ENCODE measurements at regions of chr21 and their contacts with region 1.

Region 1: DNA sequence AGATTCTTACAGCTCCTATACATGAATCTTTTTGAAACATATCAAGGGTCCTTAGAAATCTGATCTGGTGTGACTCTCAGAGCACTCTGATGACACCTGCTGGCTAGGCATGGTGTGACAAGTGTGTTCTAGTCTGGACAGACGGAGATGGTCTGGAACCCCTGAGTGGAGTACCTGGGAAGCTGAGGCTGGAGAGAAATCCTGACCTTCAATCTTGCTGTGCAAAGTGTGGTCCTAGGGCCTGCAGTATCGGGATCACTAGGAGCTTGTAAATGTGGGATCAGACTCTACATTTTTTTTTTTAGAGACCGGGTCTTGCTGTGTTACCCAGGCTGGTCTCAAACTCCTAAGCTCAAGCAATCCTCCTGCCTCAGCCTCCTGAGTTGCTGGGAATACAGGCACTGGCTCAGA is 78.6 kb upstream of the SOD1 start:
- DNase-seq: peak; percentile 26
- ATAC-seq: peak; percentile 96
- H3K4me3 ChIP-seq: no peak overlapping the region
- H3K27ac ChIP-seq: no peak overlapping the region
- H3K4me1 ChIP-seq: no peaks in the 10 kb centered on the region
- H3K27me3 ChIP-seq: no peaks in the 10 kb centered on the region
- CTCF ChIP-seq: peak; percentile 79 to 87 (median 86)
- EP300 ChIP-seq: no peak
- POLR2A ChIP-seq: no peak
- RAD21 ChIP-seq: peak; percentile 87

Region 2: GRCh38 chr21:30072496-30072895 is 1508.4 kb before region 1 on chr21:
- CTCF ChIA-PET with region 1: no interaction called
- POLR2A ChIA-PET with region 1: no interaction called
- RAD21 ChIA-PET with region 1: no interaction called
- SMC1A ChIA-PET with region 1: no interaction called
- in situ Hi-C with region 1: loop called (anchors 25 kb)
- intact Hi-C with region 1: no loop called
- DNase-seq: no peak
- ATAC-seq: 0 out of 3 replicates have a peak, but pooled peaks have one; percentile 31
- H3K4me3 ChIP-seq: no peak overlapping the region
- H3K27ac ChIP-seq: no peak overlapping the region
- H3K4me1 ChIP-seq: no peaks in the 10 kb centered on the region
- H3K27me3 ChIP-seq: no peaks in the 10 kb centered on the region
- CTCF ChIP-seq: no peak; a peak in 1 of 6 replicates
- EP300 ChIP-seq: no peak
- POLR2A ChIP-seq: no peak
- RAD21 ChIP-seq: no peak

Region 3: GRCh38 chr21:31107871-31108270 is 473.0 kb before region 1 on chr21:
- CTCF ChIA-PET with region 1: interaction called, 14 read pairs
- POLR2A ChIA-PET with region 1: no interaction called
- RAD21 ChIA-PET with region 1: interaction called, 3 read pairs
- SMC1A ChIA-PET with region 1: interaction called, 22 read pairs
- in situ Hi-C with region 1: no loop called
- intact Hi-C with region 1: no loop called
- DNase-seq: no peak
- ATAC-seq: peak; percentile 70
- H3K4me3 ChIP-seq: no peak overlapping the region
- H3K27ac ChIP-seq: no peak overlapping the region
- H3K4me1 ChIP-seq: peaks cover 11% of the 10 kb centered on the region; the same call in 1 of the 2 replicates
- H3K27me3 ChIP-seq: no peaks in the 10 kb centered on the region
- CTCF ChIP-seq: no peak
- EP300 ChIP-seq: no peak
- POLR2A ChIP-seq: no peak
- RAD21 ChIP-seq: no peak

Region 4: DNA sequence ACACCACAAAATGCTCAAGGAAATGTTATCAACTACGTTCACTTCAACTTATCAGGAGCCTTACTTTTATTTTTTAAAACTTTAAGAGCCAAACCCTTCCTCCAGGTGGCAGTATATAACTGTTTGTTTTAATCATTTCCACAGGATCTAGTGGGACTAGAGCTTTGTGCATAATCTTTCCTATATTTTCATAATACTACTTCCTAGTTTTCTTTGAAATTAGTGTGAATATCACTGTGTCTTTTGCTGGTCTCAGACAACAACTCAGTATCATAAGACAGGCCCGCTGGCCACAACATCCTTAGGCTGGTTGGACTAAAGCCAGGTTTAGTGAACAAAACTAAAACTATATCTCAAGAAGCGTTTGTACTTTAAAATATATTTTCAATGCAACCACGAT is 382.3 kb before region 1 on chr21:
- CTCF ChIA-PET with region 1: interaction called, 171 read pairs
- POLR2A ChIA-PET with region 1: no interaction called
- RAD21 ChIA-PET with region 1: interaction called, 61 read pairs
- SMC1A ChIA-PET with region 1: interaction called, 77 read pairs
- in situ Hi-C with region 1: loop called (anchors 5 kb)
- intact Hi-C with region 1: loop called (anchors 1 kb)
- DNase-seq: no peak
- ATAC-seq: peak; percentile 28; the same call in 1 of the 3 replicates
- H3K4me3 ChIP-seq: no peak overlapping the region
- H3K27ac ChIP-seq: no peak overlapping the region
- H3K4me1 ChIP-seq: no peaks in the 10 kb centered on the region
- H3K27me3 ChIP-seq: no peaks in the 10 kb centered on the region
- CTCF ChIP-seq: peak; percentile 35 to 58 (median 42); a peak in 5 of 6 replicates
- EP300 ChIP-seq: no peak
- POLR2A ChIP-seq: no peak
- RAD21 ChIP-seq: peak; percentile 64

Region 5: GRCh38 chr21:31326522-31327242 is 254.2 kb before region 1 on chr21:
- CTCF ChIA-PET with region 1: interaction called, 11 read pairs
- POLR2A ChIA-PET with region 1: no interaction called
- RAD21 ChIA-PET with region 1: interaction called, 6 read pairs
- SMC1A ChIA-PET with region 1: interaction called, 3 read pairs
- in situ Hi-C with region 1: no loop called
- intact Hi-C with region 1: no loop called
- DNase-seq: peak; percentile 95
- ATAC-seq: peak; percentile 96
- H3K4me3 ChIP-seq: 0 out of 2 replicates have a peak overlapping the region, but pooled peaks have one; percentile 15
- H3K27ac ChIP-seq: peak overlapping the region; percentile 41
- H3K4me1 ChIP-seq: peaks cover 3% of the 10 kb centered on the region; the same call in 1 of the 2 replicates
- H3K27me3 ChIP-seq: no peaks in the 10 kb centered on the region
- CTCF ChIP-seq: no peak
- EP300 ChIP-seq: peak; percentile 75 to 89; a peak in 3 of 4 replicates
- POLR2A ChIP-seq: no peak
- RAD21 ChIP-seq: no peak

Region 6: GRCh38 chr21:31509194-31510017 is 71.5 kb before region 1 on chr21:
- CTCF ChIA-PET with region 1: interaction called, 9 read pairs
- POLR2A ChIA-PET with region 1: no interaction called
- RAD21 ChIA-PET with region 1: interaction called, 7 read pairs
- SMC1A ChIA-PET with region 1: interaction called, 6 read pairs
- in situ Hi-C with region 1: no loop called
- intact Hi-C with region 1: loop called (anchors 2 kb)
- DNase-seq: peak; percentile 41
- ATAC-seq: peak; percentile 70
- H3K4me3 ChIP-seq: no peak overlapping the region
- H3K27ac ChIP-seq: no peak overlapping the region; the same call in 1 of the 2 replicates
- H3K4me1 ChIP-seq: peaks cover 25% of the 10 kb centered on the region
- H3K27me3 ChIP-seq: no peaks in the 10 kb centered on the region
- CTCF ChIP-seq: peak; percentile 33 to 47 (median 39); a peak in 4 of 6 replicates
- EP300 ChIP-seq: peak; percentile 14 to 59; a peak in 2 of 4 replicates
- POLR2A ChIP-seq: no peak
- RAD21 ChIP-seq: no peak

Region 7: DNA sequence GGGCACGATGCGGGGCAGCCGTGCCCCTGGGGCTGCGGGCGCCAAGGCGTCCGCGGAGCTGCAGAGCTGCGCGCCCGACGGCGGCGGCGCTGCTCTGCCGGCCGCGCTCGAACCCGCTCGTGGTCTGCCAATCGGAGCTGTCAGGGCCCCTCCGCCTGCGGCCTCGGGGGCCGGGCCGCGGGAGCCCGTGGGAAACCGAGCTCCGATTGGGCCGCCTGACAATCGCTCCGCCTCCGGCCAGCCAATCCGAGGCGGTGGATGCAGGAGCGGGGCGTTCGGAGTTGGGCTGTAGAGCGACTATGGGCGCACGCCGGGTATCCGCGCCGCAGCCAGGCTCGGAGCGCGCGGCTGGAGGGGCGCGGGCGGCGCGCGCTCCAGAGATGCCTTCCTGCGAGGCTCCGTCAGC is 21.9 kb before region 1 on chr21:
- CTCF ChIA-PET with region 1: interaction called, 16 read pairs
- POLR2A ChIA-PET with region 1: interaction called, 5 read pairs
- RAD21 ChIA-PET with region 1: interaction called, 17 read pairs
- SMC1A ChIA-PET with region 1: interaction called, 5 read pairs
- in situ Hi-C with region 1: no loop called
- intact Hi-C with region 1: no loop called
- DNase-seq: peak; percentile 54
- ATAC-seq: peak; percentile 85
- H3K4me3 ChIP-seq: peak overlapping the region; percentile 53
- H3K27ac ChIP-seq: no peak overlapping the region
- H3K4me1 ChIP-seq: peaks cover 8% of the 10 kb centered on the region
- H3K27me3 ChIP-seq: peaks cover 0 to 5% of the 10 kb centered on the region in 2 experiments; a peak in 1 of 4 replicates
- CTCF ChIP-seq: peak; percentile 5 to 43 (median 22); a peak in 3 of 6 replicates
- EP300 ChIP-seq: no peak
- POLR2A ChIP-seq: no peak; the same call in 1 of the 2 replicates
- RAD21 ChIP-seq: no peak

Region 8: DNA sequence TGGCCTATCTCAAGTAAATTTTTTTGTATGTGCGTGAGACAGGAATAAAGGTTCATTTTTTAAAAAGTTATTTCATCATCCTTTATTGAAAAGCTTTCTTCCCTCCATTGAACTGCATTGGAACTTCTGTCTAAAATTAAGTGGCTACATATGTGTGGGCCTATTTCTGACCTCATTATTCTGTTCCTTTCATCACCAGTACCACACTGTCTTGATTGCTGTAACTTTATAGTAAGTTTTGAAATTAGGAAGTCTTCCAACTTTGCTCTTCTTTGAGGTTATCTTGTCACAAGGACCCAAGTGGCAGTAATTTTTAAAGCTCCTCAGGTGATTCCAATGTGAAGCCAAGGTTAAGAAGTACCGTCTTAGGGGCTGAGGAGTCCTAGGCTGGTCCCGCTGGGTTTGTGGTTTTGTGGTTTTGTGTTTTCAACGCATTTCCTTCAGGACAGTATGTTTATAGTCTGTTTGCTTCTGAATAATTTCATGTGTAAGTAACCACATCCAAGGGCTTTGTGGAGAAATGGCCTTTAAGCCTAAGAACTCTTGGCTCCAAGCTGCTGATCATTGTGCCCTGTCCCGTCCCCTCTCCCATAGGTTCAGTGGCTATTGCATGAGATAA is 163.4 kb after region 1 on chr21:
- CTCF ChIA-PET with region 1: no interaction called
- POLR2A ChIA-PET with region 1: no interaction called
- RAD21 ChIA-PET with region 1: no interaction called
- SMC1A ChIA-PET with region 1: no interaction called
- in situ Hi-C with region 1: no loop called
- intact Hi-C with region 1: no loop called
- DNase-seq: no peak
- ATAC-seq: no peak
- H3K4me3 ChIP-seq: no peak overlapping the region
- H3K27ac ChIP-seq: no peak overlapping the region
- H3K4me1 ChIP-seq: no peaks in the 10 kb centered on the region
- H3K27me3 ChIP-seq: no peaks in the 10 kb centered on the region
- CTCF ChIP-seq: no peak
- EP300 ChIP-seq: no peak
- POLR2A ChIP-seq: no peak
- RAD21 ChIP-seq: no peak

Measured in GM12878 (cell line).